Breast epithelium (tissue), 4 donors: ENCODE measurements at regions of chr1 and their contacts with region 1.

Region 1: GRCh38 chr1:205578780-205579606 is 52.8 kb downstream of the ELK4 start:
- DNase-seq: no peak
- H3K4me3 ChIP-seq: no peak overlapping the region
- H3K27ac ChIP-seq: no peak overlapping the region
- H3K4me1 ChIP-seq: no peaks in the 10 kb centered on the region
- H3K27me3 ChIP-seq: no peaks in the 10 kb centered on the region
- CTCF ChIP-seq: no peak
- POLR2A ChIP-seq: no peak

Region 2: DNA sequence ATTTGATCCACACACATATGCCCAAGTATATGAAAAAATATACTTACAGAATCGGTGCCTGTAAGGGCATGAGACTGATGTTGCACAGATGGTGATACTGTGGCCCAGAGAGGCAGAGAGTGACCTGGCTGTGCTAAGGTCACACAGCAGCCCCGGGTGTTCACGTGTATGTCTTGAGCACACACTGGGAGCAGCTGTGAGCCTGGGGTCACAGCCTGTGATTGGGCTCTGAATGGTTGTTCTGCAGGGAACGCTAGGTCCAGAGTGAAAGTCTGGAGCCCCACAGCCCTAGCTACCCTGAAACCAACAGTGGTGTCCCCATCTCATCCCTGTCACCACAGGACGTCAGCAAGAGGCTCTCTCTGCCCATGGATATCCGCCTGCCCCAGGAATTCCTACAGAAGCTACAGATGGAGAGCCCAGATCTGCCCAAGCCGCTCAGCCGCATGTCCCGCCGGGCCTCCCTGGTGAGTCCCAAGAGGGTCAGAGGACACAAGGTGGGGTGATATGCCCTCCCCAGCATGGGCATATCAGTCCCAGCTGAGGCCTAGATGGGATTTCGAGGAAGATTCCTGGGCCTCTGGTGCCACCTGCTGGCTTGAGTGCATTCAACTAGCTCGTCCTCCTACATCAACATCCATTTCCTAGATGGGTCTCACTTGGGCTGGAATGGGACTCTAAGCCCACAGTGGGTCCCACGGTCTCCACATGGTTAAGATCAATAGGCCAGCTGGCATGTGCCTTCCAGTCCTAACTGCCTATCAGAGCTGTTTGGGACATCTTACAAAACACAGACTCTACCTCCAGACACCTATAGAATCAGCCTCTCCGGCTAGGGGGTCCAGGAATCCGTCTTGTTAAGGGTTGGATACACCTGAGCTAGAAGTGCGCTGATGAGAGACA is 54.9 kb before region 1 on chr1:
- intact Hi-C with region 1: no loop called
- DNase-seq: peak in 1 of 2 donors; percentile 67
- H3K4me3 ChIP-seq: no peak overlapping the region
- H3K27ac ChIP-seq: no peak overlapping the region
- H3K4me1 ChIP-seq: peaks cover 0 to 3% of the 10 kb centered on the region in 2 donors
- H3K27me3 ChIP-seq: no peaks in the 10 kb centered on the region
- CTCF ChIP-seq: peak; percentile 26 to 85 (median 81)
- POLR2A ChIP-seq: no peak

Region 3: GRCh38 chr1:205536759-205537361 is 42.1 kb before region 1 on chr1:
- intact Hi-C with region 1: no loop called
- DNase-seq: peak in 1 of 2 donors; percentile 17
- H3K4me3 ChIP-seq: no peak overlapping the region
- H3K27ac ChIP-seq: peak overlapping the region in 1 of 2 donors; percentile 14
- H3K4me1 ChIP-seq: no peaks in the 10 kb centered on the region
- H3K27me3 ChIP-seq: no peaks in the 10 kb centered on the region
- CTCF ChIP-seq: no peak
- POLR2A ChIP-seq: no peak

Region 4: DNA sequence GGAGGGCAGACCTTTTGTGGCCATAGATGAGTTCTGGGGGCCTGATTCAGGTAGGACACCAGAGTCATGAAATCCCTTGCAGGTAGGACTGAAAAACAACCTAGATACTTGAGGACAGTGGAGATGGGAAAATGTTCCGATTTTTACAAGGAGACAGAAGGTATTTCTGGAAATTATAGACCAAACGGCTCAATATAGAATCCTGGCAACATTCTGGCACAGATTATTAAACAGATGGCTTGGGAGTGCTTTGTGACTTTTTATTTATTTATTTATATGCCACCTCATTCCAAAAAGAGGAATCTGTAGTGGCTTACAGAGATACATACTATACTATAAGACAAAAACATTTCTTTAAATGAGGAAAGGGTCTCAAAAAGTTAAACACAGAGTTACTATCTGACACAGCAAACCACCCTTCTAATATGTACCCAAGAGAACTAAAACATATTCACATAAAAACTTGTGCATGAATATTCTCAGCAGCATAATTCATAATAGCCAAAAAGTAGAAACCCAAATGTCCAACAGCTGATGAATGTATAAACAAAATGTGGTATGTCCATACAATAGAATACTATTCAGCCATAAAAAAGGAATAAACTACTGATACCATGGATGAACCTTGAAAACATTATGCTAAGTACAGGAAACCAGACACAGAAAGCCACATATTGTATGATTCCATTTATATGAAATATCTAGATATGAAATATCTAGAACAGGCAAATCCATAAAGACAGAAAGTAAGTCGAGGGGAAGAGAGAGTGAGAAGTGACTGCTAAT is 24.8 kb before region 1 on chr1:
- intact Hi-C with region 1: loop called (anchors 1 kb)
- DNase-seq: no peak
- H3K4me3 ChIP-seq: no peak overlapping the region
- H3K27ac ChIP-seq: no peak overlapping the region
- H3K4me1 ChIP-seq: no peaks in the 10 kb centered on the region
- H3K27me3 ChIP-seq: no peaks in the 10 kb centered on the region
- CTCF ChIP-seq: no peak
- POLR2A ChIP-seq: no peak